H1 (cell line): ENCODE measurements at regions of chr1 and their contacts with region 1.

Region 1: GRCh38 chr1:205711104-205712020 is 31.1 kb upstream of the SLC45A3 start:
- DNase-seq: no peak
- H3K4me3 ChIP-seq: no peak overlapping the region
- H3K27ac ChIP-seq: peak overlapping the region; percentile 12; the same call in 1 of the 2 replicates
- H3K4me1 ChIP-seq: peaks cover 0 to 3% (median 1%) of the 10 kb centered on the region in 4 experiments; a peak in 2 of 7 replicates
- H3K27me3 ChIP-seq: no peaks in the 10 kb centered on the region
- CTCF ChIP-seq: peak in 2 of 3 experiments; percentile 85 to 86; a peak in 3 of 4 replicates
- EP300 ChIP-seq: no peak
- POLR2A ChIP-seq: no peak
- RAD21 ChIP-seq: peak; percentile 94 to 95

Region 2: GRCh38 chr1:205631727-205632373 is 79.5 kb before region 1 on chr1 and contains the start of gene ELK4:
- CTCF ChIA-PET with region 1: interaction called, 23 read pairs
- POLR2A ChIA-PET with region 1: interaction called, 7 read pairs
- DNase-seq: peak; percentile 91 to 99
- H3K4me3 ChIP-seq: peak within 1 kb of the TSS; percentile 72 to 90 (median 78)
- H3K27ac ChIP-seq: peak within 1 kb of the TSS; percentile 93
- H3K4me1 ChIP-seq: no peaks in the 10 kb centered on the region; a peak in 2 of 7 replicates
- H3K27me3 ChIP-seq: no peaks in the 10 kb centered on the region
- CTCF ChIP-seq: peak; percentile 64 to 71 (median 65)
- EP300 ChIP-seq: peak in 1 of 2 experiments; percentile 14; a peak in 1 of 3 replicates
- POLR2A ChIP-seq: peak; percentile 83 to 95
- RAD21 ChIP-seq: peak; percentile 74 to 75
- total RNA-seq, gene ELK4: 23.3 and 26.3 TPM in 2 replicates

Region 3: GRCh38 chr1:205680073-205680851 is 31.1 kb before region 1 on chr1 and contains the start of gene SLC45A3:
- CTCF ChIA-PET with region 1: interaction called, 154 read pairs
- POLR2A ChIA-PET with region 1: interaction called, 18 read pairs
- DNase-seq: no peak
- H3K4me3 ChIP-seq: peak within 1 kb of the TSS; percentile 63 to 93 (median 72)
- H3K27ac ChIP-seq: peak within 1 kb of the TSS; percentile 48; the same call in 1 of the 2 replicates
- H3K4me1 ChIP-seq: peaks cover 4 to 30% (median 15%) of the 10 kb centered on the region in 4 experiments
- H3K27me3 ChIP-seq: peaks cover 0 to 11% (median 2%) of the 10 kb centered on the region in 4 experiments; a peak in 2 of 7 replicates
- CTCF ChIP-seq: no peak
- EP300 ChIP-seq: no peak
- POLR2A ChIP-seq: peak in 1 of 2 experiments; percentile 31; a peak in 1 of 3 replicates
- RAD21 ChIP-seq: no peak
- total RNA-seq, gene SLC45A3: 12.5 and 13.0 TPM in 2 replicates

Region 4: DNA sequence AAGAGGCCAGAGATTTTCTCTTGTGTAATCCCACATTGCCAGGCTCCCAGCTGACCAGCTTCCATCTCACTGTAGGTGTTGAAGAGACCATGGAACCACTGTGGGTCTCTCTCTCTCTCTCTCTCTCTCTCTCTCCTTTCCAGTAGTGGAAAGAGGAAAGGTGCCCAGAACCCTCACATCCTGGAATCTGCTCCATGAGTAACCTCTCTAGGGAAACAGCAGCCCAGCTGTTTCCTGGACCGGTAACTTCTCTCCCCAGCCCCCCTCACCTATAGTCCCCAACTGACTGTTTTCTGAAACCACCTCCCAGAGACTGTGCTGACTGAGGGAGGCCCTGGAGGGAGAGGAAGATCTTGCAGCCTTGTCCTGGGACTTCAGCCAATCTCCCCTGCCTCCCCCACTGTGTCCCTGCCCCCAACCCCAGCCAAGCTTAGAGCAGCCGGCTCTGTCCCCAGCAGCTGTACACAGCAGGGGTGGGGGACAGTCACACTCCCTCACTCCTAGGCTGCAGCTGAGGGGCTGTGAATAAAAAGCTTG is 10.4 kb before region 1 on chr1:
- CTCF ChIA-PET with region 1: interaction called, 152 read pairs
- POLR2A ChIA-PET with region 1: interaction called, 13 read pairs
- DNase-seq: no peak
- H3K4me3 ChIP-seq: peak overlapping the region in 1 of 4 experiments; percentile 6; a peak in 1 of 8 replicates
- H3K27ac ChIP-seq: no peak overlapping the region
- H3K4me1 ChIP-seq: peaks cover 0 to 7% (median 5%) of the 10 kb centered on the region in 4 experiments; a peak in 4 of 7 replicates
- H3K27me3 ChIP-seq: no peaks in the 10 kb centered on the region
- CTCF ChIP-seq: no peak
- EP300 ChIP-seq: no peak
- POLR2A ChIP-seq: no peak
- RAD21 ChIP-seq: 0 out of 4 replicates have a peak, but pooled peaks of 1 of the 2 experiments have one; percentile 1

Region 5: DNA sequence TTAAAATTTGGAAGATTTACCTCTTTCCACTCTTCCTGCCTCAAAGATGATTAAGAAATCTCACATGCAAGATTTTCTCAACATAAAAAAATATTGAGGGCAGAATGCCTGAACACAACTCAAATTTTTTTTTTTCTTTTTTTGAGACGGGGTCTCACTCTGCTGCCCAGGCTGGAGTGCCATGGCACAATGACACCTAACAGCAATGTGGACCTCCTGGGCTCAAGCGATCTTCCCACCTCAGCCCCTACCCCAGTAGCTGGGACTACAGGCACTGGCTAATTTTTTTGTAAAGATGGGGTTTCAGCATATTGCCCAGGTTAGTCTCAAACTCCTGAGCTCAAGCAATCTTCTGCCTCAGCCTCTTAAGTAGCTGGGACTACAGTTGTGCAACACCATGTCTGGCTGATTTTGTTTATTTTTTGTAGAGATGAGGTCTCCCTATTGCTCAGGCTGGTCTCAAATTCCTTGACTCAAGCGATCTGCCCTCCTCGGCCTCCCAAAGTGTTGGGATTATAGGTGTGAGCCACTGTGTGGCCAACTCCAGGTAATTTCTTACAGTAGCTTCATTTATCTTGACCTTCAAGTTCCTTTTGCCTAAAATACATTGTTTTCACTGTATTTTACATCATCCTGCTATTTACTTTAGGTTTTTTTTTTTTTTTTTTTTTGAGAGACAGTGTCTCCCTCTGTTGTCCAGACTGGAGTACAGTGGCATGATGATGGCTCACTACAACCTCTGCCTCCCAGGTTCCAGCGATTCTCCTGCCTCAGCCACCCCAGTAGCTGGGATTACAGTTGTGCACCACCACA is 28.2 kb after region 1 on chr1:
- CTCF ChIA-PET with region 1: interaction called, 15 read pairs
- POLR2A ChIA-PET with region 1: interaction called, 3 read pairs
- DNase-seq: no peak
- H3K4me3 ChIP-seq: no peak overlapping the region
- H3K27ac ChIP-seq: no peak overlapping the region
- H3K4me1 ChIP-seq: peaks cover 3 to 11% (median 7%) of the 10 kb centered on the region in 4 experiments; a peak in 5 of 7 replicates
- H3K27me3 ChIP-seq: no peaks in the 10 kb centered on the region
- CTCF ChIP-seq: peak in 1 of 3 experiments; percentile 7; a peak in 1 of 4 replicates
- EP300 ChIP-seq: no peak
- POLR2A ChIP-seq: no peak
- RAD21 ChIP-seq: no peak

Region 6: DNA sequence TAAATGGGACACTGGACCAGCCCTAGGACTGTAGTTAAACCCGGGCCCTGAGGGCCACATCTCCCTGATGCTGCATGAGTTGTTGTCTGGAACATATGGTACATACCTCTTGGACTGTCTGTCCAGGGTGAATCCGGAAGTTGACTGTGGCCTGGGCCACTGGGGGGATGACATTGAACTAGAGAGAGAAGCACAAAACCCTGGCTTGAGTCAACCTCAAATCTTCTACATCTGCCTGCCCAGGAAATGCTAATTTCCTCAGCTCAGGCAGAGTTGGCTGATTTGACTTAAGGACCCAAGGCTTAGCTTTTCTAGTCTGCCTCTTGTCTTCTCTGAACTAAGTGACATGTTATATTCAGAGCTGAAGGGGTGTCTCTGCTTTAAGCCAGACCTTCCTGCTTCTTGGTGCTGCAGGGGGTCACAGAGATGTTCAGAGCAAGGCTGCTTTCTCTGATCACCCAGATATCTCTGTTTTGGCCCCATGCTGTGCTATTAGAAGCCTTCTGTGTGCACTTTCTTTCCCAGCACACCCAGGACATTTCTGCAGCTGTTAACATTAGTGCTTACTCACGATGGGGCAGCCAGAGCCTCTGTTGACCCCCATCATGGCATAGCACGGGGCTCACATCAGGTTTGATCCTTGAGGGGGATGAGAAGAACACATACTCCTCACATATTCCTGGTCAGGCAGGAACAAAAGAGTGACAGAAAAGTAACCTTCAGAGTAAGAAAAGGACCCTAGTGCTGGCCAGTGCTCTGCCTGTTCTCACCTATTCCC is 129.0 kb after region 1 on chr1:
- CTCF ChIA-PET with region 1: no interaction called
- POLR2A ChIA-PET with region 1: no interaction called
- DNase-seq: no peak
- H3K4me3 ChIP-seq: no peak overlapping the region
- H3K27ac ChIP-seq: no peak overlapping the region
- H3K4me1 ChIP-seq: no peaks in the 10 kb centered on the region
- H3K27me3 ChIP-seq: no peaks in the 10 kb centered on the region
- CTCF ChIP-seq: no peak
- EP300 ChIP-seq: no peak
- POLR2A ChIP-seq: no peak
- RAD21 ChIP-seq: no peak